ENCODE measurements at regions of chr3 and their contacts with region 1.

Region 1: DNA sequence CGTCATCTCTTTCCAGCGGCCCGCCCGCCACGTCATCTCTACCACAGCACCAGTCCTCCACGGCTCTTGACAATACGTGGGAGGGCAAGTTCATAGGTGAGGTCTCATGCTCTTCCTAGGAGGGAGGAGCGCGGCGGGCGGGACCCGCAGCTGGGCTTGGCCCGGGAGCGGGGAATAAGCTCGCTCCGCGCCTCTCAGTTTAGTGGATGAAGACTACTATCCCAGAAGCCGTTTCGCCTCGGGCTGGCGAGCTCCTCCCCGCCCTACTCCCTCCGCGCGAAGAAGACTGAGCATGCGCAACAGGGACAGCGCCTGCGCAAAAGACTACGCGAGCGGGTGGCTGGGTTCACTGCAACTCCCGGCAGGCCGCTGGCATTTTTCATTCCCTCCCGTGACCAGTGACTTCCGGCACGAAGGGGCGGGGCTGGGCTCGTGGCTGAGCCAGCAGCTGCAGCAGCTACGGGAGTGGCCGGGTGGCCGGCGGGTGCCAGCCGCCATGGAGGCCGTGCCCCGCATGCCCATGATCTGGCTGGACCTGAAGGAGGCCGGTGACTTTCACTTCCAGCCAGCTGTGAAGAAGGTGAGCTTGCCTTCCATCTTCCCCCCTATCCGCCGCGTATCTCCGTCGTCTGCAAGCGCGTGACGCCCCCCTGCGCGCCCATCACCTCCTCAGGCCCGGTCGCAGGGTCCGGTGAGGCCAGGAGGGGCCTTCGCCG is at the start of gene PTPN23:
- DNase-seq: peak; percentile 100
- H3K4me3 ChIP-seq: peak within 1 kb of the TSS; percentile 63 to 81 (median 67)
- H3K27ac ChIP-seq: peak within 1 kb of the TSS; percentile 79
- H3K4me1 ChIP-seq: peaks cover 13% of the 10 kb centered on the region
- H3K27me3 ChIP-seq: no peaks in the 10 kb centered on the region
- CTCF ChIP-seq: no peak
- POLR2A ChIP-seq: peak; percentile 96
- total RNA-seq, gene PTPN23: 57.4 and 63.5 TPM in 2 replicates

Region 2: GRCh38 chr3:46976326-46977190 is 404.2 kb before region 1 on chr3 and contains the start of gene CCDC12:
- CTCF ChIA-PET with region 1: no interaction called
- POLR2A ChIA-PET with region 1: no interaction called
- dilution Hi-C with region 1: no loop called
- intact Hi-C with region 1: loop called (anchors 1 kb)
- DNase-seq: peak; percentile 99
- H3K4me3 ChIP-seq: peak within 1 kb of the TSS; percentile 52 to 86 (median 79)
- H3K27ac ChIP-seq: peak within 1 kb of the TSS; percentile 82
- H3K4me1 ChIP-seq: peaks cover 39% of the 10 kb centered on the region
- H3K27me3 ChIP-seq: no peaks in the 10 kb centered on the region
- CTCF ChIP-seq: no peak
- POLR2A ChIP-seq: peak; percentile 92
- total RNA-seq, gene CCDC12: 45.0 and 50.5 TPM in 2 replicates

Region 3: GRCh38 chr3:47128137-47128536 is 252.6 kb before region 1 on chr3:
- CTCF ChIA-PET with region 1: no interaction called
- POLR2A ChIA-PET with region 1: no interaction called
- dilution Hi-C with region 1: no loop called
- intact Hi-C with region 1: no loop called
- DNase-seq: no peak
- H3K4me3 ChIP-seq: no peak overlapping the region
- H3K27ac ChIP-seq: no peak overlapping the region
- H3K4me1 ChIP-seq: no peaks in the 10 kb centered on the region
- H3K27me3 ChIP-seq: no peaks in the 10 kb centered on the region
- CTCF ChIP-seq: no peak
- POLR2A ChIP-seq: no peak

Region 4: DNA sequence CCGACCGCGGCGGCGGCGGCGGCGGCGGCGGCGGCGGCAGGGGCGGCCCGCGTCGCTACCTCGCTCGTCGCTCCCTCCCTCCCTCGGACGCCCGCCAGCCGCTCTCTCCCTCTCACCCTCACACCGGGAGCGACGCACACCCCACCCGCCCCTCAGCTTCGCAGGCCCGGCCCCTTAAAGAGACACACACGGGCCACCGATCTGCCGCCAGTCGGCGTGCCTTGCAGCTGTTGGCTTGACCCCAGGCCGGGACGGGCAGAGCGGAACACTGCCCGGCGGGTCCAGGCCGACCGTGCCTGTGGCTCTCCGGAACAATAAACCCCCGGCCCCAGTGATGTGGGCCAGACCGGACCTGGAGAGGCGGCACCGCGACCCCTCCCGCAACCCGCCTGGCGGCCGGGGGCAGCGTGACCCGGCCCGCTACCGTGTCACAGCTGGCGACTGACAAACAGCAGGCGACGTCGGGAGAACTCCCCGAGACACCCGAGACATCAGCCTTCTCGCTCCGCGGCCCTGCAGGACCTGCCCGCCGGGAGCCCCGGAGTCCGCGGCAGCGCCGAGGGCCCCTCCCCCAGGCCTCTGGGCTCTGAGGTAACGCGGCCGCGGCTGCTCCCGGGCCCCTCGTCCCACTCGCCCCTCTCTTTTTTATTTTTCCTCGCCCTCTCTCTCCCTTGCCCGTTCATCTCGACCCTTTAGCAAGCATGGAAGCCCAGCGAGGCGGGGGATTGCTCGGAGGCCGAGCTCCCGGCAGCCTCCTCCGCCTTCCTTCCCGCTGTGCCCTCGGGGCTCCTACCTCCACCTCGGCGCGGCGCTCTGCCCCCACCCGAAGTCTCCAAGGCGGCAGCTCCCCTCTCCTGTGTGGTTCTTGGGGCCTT is 216.5 kb before region 1 on chr3 and contains the start of gene SETD2:
- CTCF ChIA-PET with region 1: interaction called, 3 read pairs
- POLR2A ChIA-PET with region 1: no interaction called
- dilution Hi-C with region 1: no loop called
- intact Hi-C with region 1: loop called (anchors 5 kb)
- DNase-seq: peak; percentile 90
- H3K4me3 ChIP-seq: peak within 1 kb of the TSS; percentile 58 to 97 (median 88)
- H3K27ac ChIP-seq: peak within 1 kb of the TSS; percentile 78
- H3K4me1 ChIP-seq: peaks cover 19% of the 10 kb centered on the region
- H3K27me3 ChIP-seq: no peaks in the 10 kb centered on the region
- CTCF ChIP-seq: peak in 1 of 2 donors; percentile 21
- POLR2A ChIP-seq: peak; percentile 31
- total RNA-seq, gene SETD2: 36.2 and 41.4 TPM in 2 replicates

Region 5: GRCh38 chr3:47282424-47283192 is 98.2 kb before region 1 on chr3 and contains the starts of genes KIF9 and KLHL18:
- CTCF ChIA-PET with region 1: no interaction called
- POLR2A ChIA-PET with region 1: no interaction called
- dilution Hi-C with region 1: no loop called
- intact Hi-C with region 1: loop called (anchors 5 kb)
- DNase-seq: peak; percentile 91
- H3K4me3 ChIP-seq: peak within 1 kb of the TSS; percentile 63 to 93 (median 82)
- H3K27ac ChIP-seq: peak within 1 kb of the TSS; percentile 80
- H3K4me1 ChIP-seq: peaks cover 7% of the 10 kb centered on the region
- H3K27me3 ChIP-seq: no peaks in the 10 kb centered on the region
- CTCF ChIP-seq: no peak
- POLR2A ChIP-seq: peak; percentile 91
- total RNA-seq, gene KIF9: 20.7 and 22.4 TPM in 2 replicates
- total RNA-seq, gene KLHL18: 43.4 and 47.2 TPM in 2 replicates

Region 6: GRCh38 chr3:47313341-47314055 is 67.3 kb before region 1 on chr3:
- CTCF ChIA-PET with region 1: no interaction called
- POLR2A ChIA-PET with region 1: no interaction called
- dilution Hi-C with region 1: no loop called
- intact Hi-C with region 1: no loop called
- DNase-seq: no peak
- H3K4me3 ChIP-seq: no peak overlapping the region
- H3K27ac ChIP-seq: no peak overlapping the region
- H3K4me1 ChIP-seq: peaks cover 11% of the 10 kb centered on the region
- H3K27me3 ChIP-seq: no peaks in the 10 kb centered on the region
- CTCF ChIP-seq: no peak
- POLR2A ChIP-seq: no peak

Region 7: DNA sequence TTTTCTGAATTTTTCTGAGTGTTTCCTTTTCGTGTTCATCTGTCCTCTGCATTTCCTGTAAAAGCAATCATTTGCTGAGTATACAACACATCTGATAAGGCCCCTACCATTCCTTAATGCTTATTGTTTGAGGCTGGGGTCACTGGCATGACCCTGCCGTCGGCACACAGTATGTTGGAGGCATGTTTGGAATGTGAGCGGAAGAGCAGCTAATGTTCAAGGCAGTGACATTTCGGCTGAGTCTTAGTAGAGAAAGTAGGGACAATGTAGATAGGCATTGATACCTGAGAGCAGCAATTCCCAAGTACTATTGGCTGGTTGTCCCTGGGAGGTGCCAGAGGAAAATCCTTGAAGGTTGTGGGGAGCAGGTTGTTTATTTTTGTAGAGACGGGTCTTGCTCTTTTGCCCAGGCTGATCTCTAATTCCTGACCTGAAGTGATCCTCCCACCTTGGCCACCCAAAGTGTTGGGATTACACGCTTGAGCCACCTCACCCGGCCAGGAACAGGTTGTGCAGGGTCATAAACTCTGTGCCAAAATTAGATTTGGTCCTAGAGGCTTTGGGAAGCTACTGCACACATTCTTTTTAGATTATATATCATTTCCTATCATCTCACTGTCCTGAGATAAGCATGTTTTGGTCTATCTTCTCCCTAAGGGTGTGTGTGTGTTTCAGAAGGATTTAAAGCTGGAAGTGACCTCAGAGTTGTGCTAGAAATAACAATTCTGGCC is 13.5 kb after region 1 on chr3:
- CTCF ChIA-PET with region 1: interaction called, 5 read pairs
- POLR2A ChIA-PET with region 1: interaction called, 3 read pairs
- dilution Hi-C with region 1: no loop called
- intact Hi-C with region 1: loop called (anchors 1 kb)
- DNase-seq: peak; percentile 83
- H3K4me3 ChIP-seq: no peak overlapping the region
- H3K27ac ChIP-seq: peak overlapping the region; percentile 67
- H3K4me1 ChIP-seq: peaks cover 24% of the 10 kb centered on the region
- H3K27me3 ChIP-seq: no peaks in the 10 kb centered on the region
- CTCF ChIP-seq: no peak
- POLR2A ChIP-seq: no peak

Region 8: GRCh38 chr3:47420511-47421484 is 40.0 kb after region 1 on chr3:
- CTCF ChIA-PET with region 1: interaction called, 5 read pairs
- POLR2A ChIA-PET with region 1: interaction called, 3 read pairs
- dilution Hi-C with region 1: no loop called
- intact Hi-C with region 1: loop called (anchors 2 kb)
- DNase-seq: peak; percentile 82
- H3K4me3 ChIP-seq: no peak overlapping the region
- H3K27ac ChIP-seq: peak overlapping the region; percentile 16
- H3K4me1 ChIP-seq: no peaks in the 10 kb centered on the region
- H3K27me3 ChIP-seq: no peaks in the 10 kb centered on the region
- CTCF ChIP-seq: peak; percentile 95 to 97
- POLR2A ChIP-seq: no peak

Region 9: GRCh38 chr3:47877290-47877689 is 496.5 kb after region 1 on chr3:
- CTCF ChIA-PET with region 1: no interaction called
- POLR2A ChIA-PET with region 1: interaction called, 13 read pairs
- dilution Hi-C with region 1: no loop called
- intact Hi-C with region 1: no loop called
- DNase-seq: peak; percentile 46
- H3K4me3 ChIP-seq: no peak overlapping the region
- H3K27ac ChIP-seq: peak overlapping the region; percentile 72
- H3K4me1 ChIP-seq: peaks cover 20% of the 10 kb centered on the region
- H3K27me3 ChIP-seq: no peaks in the 10 kb centered on the region
- CTCF ChIP-seq: no peak
- POLR2A ChIP-seq: no peak

Measured in endothelial cell of umbilical vein (primary cell).